ENCODE measurements at regions of chr21 and their contacts with region 1.

Region 1: DNA sequence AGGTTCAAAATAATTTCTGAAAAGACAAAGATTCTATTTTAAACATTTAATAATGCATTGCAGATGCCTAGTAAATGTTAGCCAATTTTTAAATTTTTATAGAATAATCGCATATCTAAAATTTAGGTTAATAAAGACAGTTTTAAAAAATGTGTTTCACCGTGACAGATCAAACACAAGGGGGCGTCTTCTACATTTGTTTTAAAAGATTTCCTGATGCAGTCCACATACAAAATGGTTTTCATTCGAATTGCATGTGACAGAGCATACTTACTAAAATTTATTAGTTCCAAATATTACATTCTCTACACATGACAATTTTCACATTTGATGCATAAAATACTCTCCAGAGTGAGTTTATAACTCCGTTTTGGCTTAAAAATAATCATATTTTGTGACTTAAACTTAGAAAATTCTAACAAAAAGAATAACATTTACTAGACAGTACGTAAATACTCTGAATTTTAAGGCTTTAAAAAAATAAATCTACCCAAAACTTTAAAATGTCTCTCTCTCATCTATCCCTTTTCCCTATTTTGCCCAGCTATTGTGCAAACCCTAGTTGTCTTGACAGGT is 75.5 kb downstream of the ADAMTS1 start:
- DNase-seq: no peak
- ATAC-seq: no peak
- H3K4me3 ChIP-seq: no peak overlapping the region
- H3K27ac ChIP-seq: no peak overlapping the region
- H3K4me1 ChIP-seq: no peaks in the 10 kb centered on the region
- H3K27me3 ChIP-seq: no peaks in the 10 kb centered on the region
- CTCF ChIP-seq: 0 out of 2 replicates have a peak, but pooled peaks have one; percentile 7
- EP300 ChIP-seq: no peak
- POLR2A ChIP-seq: no peak
- RAD21 ChIP-seq: no peak

Region 2: DNA sequence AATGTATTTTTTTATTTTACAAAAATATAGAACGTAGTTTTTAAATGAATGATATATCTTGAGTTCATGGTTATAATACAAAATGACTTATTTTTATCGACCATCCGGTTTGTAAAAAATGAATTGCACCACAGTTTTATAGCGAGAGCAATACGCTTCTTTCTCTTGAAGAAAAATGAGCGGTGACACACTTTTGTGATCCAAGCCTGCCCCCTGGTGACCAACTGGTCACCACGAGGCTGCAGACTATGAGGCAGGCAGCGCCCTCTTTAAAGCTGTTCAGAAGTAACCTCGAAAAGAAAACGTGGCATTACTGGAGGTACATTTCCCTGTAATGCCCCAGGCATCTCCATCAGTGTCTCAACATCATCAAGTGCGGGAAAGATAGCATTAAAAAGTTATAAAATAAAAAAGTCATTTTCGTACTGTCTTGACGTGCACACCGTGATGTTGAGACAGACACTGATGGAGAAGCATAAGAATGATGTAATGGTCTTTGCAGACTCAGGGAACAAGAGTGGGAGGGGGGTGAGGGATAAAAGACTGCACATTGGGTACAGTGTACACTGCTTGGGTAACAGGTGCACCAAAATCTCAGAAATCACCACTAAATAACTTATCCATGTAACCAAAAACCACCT is 931.4 kb after region 1 on chr21:
- CTCF ChIA-PET with region 1: no interaction called
- POLR2A ChIA-PET with region 1: no interaction called
- in situ Hi-C with region 1: no loop called
- intact Hi-C with region 1: loop called (anchors 2 kb)
- DNase-seq: peak; percentile 20
- ATAC-seq: peak; percentile 91
- H3K4me3 ChIP-seq: no peak overlapping the region
- H3K27ac ChIP-seq: no peak overlapping the region
- H3K4me1 ChIP-seq: no peaks in the 10 kb centered on the region
- H3K27me3 ChIP-seq: no peaks in the 10 kb centered on the region
- CTCF ChIP-seq: peak; percentile 76
- EP300 ChIP-seq: no peak
- POLR2A ChIP-seq: no peak
- RAD21 ChIP-seq: peak; percentile 69